T-cell (primary cell): ENCODE measurements at regions of chr13 and their contacts with region 1.

Region 1: DNA sequence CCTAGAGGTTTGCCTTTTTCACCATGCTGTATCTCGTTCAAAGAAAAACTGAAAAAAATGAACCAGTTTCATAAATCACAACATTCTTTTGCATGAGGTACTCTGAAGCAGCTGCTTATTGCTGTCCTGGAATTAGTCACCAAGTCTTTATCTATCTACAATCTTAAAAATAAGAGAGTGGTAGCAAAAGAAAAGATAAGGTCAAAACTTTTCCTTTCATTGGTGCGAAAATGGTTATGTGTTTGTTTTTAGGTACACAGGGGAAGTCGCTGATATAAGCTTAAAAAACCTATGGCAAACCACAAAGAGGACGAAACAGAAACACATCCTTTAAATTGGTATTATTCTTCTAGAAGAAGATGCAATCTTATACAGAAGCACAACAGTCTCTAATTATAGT is 20.7 kb downstream of the OBI1 start:
- DNase-seq: no peak
- ATAC-seq: no peak
- H3K4me3 ChIP-seq: no peak overlapping the region
- H3K4me3 Mint-ChIP-seq: no peak overlapping the region
- H3K27ac ChIP-seq: no peak overlapping the region
- H3K27ac Mint-ChIP-seq: no peak overlapping the region
- H3K4me1 ChIP-seq: no peaks in the 10 kb centered on the region
- H3K4me1 Mint-ChIP-seq: peaks cover 5 to 8% (median 8%) of the 10 kb centered on the region in 3 donors
- H3K27me3 ChIP-seq: no peaks in the 10 kb centered on the region
- H3K27me3 Mint-ChIP-seq: no peaks in the 10 kb centered on the region

Region 2: DNA sequence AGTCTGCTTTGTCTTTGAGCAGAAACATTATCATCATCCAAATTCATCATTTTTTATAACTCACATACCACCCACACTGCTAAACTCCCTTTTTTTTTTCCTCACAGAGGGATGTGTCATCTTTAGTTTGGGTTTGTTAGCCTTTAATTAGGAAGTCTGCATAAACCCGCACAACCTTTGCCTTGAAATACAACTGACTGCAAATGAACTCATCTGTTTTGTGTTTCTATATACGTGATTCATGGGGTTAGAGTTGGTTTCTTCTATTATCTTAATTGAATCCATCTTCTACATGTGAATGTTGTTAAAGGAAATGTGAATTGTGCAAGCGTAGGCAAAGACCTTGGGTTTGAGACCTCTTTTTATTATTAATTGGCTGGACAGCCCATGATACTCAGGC is 838.0 kb before region 1 on chr13:
- CTCF ChIA-PET with region 1: no interaction called
- POLR2A ChIA-PET with region 1: no interaction called
- DNase-seq: no peak
- ATAC-seq: no peak
- H3K4me3 ChIP-seq: no peak overlapping the region
- H3K4me3 Mint-ChIP-seq: no peak overlapping the region
- H3K27ac ChIP-seq: no peak overlapping the region
- H3K27ac Mint-ChIP-seq: no peak overlapping the region
- H3K4me1 ChIP-seq: no peaks in the 10 kb centered on the region
- H3K4me1 Mint-ChIP-seq: no peaks in the 10 kb centered on the region
- H3K27me3 ChIP-seq: no peaks in the 10 kb centered on the region
- H3K27me3 Mint-ChIP-seq: peaks cover 0 to 14% of the 10 kb centered on the region in 2 donors

Region 3: GRCh38 chr13:78468621-78469020 is 169.6 kb before region 1 on chr13:
- CTCF ChIA-PET with region 1: no interaction called
- POLR2A ChIA-PET with region 1: no interaction called
- DNase-seq: no peak
- ATAC-seq: no peak
- H3K4me3 ChIP-seq: no peak overlapping the region
- H3K4me3 Mint-ChIP-seq: no peak overlapping the region
- H3K27ac ChIP-seq: no peak overlapping the region
- H3K27ac Mint-ChIP-seq: no peak overlapping the region
- H3K4me1 ChIP-seq: no peaks in the 10 kb centered on the region
- H3K4me1 Mint-ChIP-seq: no peaks in the 10 kb centered on the region
- H3K27me3 ChIP-seq: no peaks in the 10 kb centered on the region
- H3K27me3 Mint-ChIP-seq: peaks cover 0 to 11% of the 10 kb centered on the region in 2 donors

Region 4: GRCh38 chr13:78658635-78659449 is 20.6 kb after region 1 on chr13 and contains the start of gene OBI1:
- CTCF ChIA-PET with region 1: interaction called, 3 read pairs
- POLR2A ChIA-PET with region 1: interaction called in 1 of 2 experiments, 13 read pairs
- DNase-seq: peak; percentile 76 to 94 (median 88)
- ATAC-seq: peak; percentile 92 to 97 (median 94)
- H3K4me3 ChIP-seq: peak within 1 kb of the TSS; percentile 90 to 92
- H3K4me3 Mint-ChIP-seq: peak within 1 kb of the TSS; percentile 95 to 100 (median 95)
- H3K27ac ChIP-seq: peak within 1 kb of the TSS; percentile 53
- H3K27ac Mint-ChIP-seq: peak within 1 kb of the TSS; percentile 89 to 92
- H3K4me1 ChIP-seq: peaks cover 9 to 14% of the 10 kb centered on the region in 2 experiments
- H3K4me1 Mint-ChIP-seq: peaks cover 41 to 54% (median 45%) of the 10 kb centered on the region in 3 donors
- H3K27me3 ChIP-seq: no peaks in the 10 kb centered on the region
- H3K27me3 Mint-ChIP-seq: peaks cover 0 to 2% of the 10 kb centered on the region in 2 donors
- total RNA-seq, gene OBI1: 4.8 to 14.3 (median 12.3) TPM